ENCODE measurements at regions of chr9 and their contacts with region 1.

Region 1: DNA sequence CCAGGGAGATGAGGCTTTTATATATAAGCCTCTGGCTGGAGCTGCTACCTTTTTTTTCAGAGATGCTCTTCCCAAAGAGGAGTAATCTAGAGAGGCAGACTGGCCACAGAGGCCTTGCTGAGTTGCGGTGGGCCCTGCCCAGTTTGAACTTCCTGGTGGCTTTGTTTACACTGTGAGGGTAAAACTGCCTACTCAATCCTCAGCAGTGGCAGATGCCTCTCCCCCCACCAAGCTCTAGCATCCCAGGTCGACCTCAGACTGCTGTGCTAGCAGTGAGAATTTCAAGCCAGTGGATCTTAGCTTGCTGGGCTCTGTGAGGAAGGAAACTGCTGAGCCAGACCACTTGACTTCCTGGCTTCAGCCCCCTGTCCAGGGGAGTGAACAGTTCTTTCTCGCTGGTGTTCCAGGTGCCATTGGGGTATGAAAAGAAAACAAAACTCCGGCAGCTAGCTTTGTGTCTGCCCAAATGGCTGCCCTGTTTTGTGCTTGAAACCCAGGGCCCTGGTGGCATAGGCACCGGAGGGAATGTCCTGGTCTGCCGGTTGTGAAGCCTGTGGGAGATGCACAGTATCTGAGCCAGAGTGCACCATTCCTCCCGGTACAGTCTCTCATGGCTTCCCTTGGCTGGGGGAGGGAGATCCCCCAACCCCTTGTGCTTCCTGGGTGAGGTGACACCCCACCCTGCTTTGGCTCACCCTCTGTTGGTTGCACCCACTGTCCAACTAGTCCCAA is 219.5 kb upstream of the IZUMO3 start:
- DNase-seq: no peak
- H3K4me3 ChIP-seq: no peak overlapping the region
- H3K27ac ChIP-seq: no peak overlapping the region
- H3K27me3 ChIP-seq: peaks cover 0 to 3% (median 0%) of the 10 kb centered on the region in 45 donors
- CTCF ChIP-seq: no peak

Region 2: DNA sequence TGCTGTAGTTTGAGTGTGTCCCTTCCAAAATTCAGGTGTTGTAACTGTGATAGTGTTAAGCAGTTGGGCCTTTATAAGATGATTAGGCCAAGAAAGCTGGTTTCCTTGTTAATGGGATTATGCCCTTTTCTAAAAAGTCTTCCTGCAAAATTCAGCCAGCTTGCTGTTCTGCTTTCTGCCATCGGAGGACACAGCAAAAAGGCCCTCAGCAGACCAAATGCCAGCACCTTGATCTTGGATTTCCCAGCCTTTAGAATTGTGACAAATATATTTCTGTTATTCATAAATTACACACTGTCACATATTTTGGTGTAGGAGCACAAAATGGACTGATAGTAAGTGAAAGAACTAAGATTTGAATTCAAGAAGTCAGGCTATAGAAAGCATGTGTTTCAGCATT is 422.7 kb before region 1 on chr9:
- intact Hi-C with region 1: no loop called
- DNase-seq: no peak
- H3K4me3 ChIP-seq: no peak overlapping the region
- H3K27ac ChIP-seq: no peak overlapping the region
- H3K27me3 ChIP-seq: peaks cover 0 to 3% (median 0%) of the 10 kb centered on the region in 45 donors
- CTCF ChIP-seq: no peak

Region 3: DNA sequence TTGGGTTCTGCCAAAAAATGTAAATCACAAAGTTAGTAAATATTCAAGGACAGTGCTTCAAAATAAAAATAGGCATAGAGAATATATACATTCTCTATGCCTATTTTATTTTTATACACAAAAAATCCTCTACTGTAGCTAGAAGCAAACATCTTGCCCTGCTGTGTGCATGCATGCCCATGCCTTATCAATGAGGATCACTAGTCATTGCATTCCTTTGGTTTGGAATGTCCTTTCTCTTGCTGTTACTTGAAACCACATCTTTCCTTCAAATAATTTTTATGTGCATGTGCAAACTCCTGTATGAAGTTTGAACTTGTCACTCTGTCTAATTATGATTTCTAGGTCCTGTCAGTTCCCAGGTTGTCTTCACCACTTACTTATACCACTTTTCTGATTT is 59.4 kb after region 1 on chr9:
- intact Hi-C with region 1: loop called in 1 of 2 experiments (anchors 10 kb)
- DNase-seq: no peak
- H3K4me3 ChIP-seq: no peak overlapping the region
- H3K27ac ChIP-seq: no peak overlapping the region
- H3K27me3 ChIP-seq: peaks cover 0 to 4% (median 0%) of the 10 kb centered on the region in 45 donors
- CTCF ChIP-seq: no peak